Activated naive CD8-positive, alpha-beta T cell treated with anti-CD3 and anti-CD28 coated beads, Interleukin-2, amount 10 ng/mL, durations not matched to agents 7 days and 5 days (primary cell): ENCODE measurements at regions of chr5 and their contacts with region 1.

Region 1: DNA sequence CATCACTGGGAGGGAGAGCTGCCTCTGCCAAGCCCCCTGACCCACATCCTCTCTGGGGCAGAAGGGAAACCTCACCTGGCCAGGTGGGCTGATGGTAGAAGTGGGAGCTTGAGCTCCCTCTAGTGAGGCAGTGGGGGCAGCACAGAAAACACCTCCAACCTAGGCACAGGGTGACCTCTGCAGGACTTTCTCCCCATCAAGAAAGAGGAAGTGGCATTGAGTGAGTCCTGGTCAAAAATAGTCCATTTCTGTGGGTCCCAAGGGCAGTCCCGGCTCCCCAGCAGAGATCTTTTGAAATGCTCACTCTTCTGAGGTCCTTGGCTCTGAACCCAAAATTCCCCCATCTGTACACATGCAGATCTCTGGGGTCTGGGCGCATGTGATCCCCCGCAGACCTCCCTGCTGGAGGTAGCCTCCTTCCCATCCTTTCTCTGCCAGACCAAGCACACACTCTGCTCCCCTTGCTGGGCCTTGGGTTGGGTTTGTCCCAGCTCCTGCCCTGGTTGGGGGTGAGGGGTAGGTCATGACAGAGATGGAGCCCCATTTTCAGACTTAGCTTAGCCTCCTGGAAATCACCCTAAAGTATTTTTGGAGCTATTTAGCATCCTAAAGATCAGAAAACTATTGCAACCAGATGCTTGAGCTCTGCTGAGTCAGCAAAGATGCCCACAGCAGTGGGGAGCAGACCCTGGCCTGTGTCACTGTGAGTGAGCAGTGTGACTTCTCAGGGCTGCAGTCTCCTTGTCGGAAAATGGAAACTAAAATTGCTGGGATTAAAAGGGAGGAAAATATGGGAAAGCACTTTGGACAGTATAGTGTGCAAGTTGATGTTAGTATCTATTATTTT is 41.6 kb upstream of the LCP2 start:
- DNase-seq: peak; percentile 68
- ATAC-seq: peak; percentile 73
- H3K4me3 Mint-ChIP-seq: no peak overlapping the region
- H3K27ac Mint-ChIP-seq: no peak overlapping the region
- H3K4me1 Mint-ChIP-seq: peaks cover 41% of the 10 kb centered on the region
- H3K27me3 Mint-ChIP-seq: peaks cover 5% of the 10 kb centered on the region

Region 2: GRCh38 chr5:170120576-170120975 is 218.6 kb before region 1 on chr5:
- POLR2A ChIA-PET with region 1: no interaction called
- DNase-seq: no peak
- ATAC-seq: no peak
- H3K4me3 Mint-ChIP-seq: no peak overlapping the region
- H3K27ac Mint-ChIP-seq: no peak overlapping the region
- H3K4me1 Mint-ChIP-seq: no peaks in the 10 kb centered on the region
- H3K27me3 Mint-ChIP-seq: peaks cover 16% of the 10 kb centered on the region

Region 3: GRCh38 chr5:170267431-170268152 is 71.6 kb before region 1 on chr5:
- POLR2A ChIA-PET with region 1: interaction called, 34 read pairs
- DNase-seq: peak; percentile 79
- ATAC-seq: peak; percentile 44
- H3K4me3 Mint-ChIP-seq: peak overlapping the region; percentile 75
- H3K27ac Mint-ChIP-seq: peak overlapping the region; percentile 92
- H3K4me1 Mint-ChIP-seq: peaks cover 85% of the 10 kb centered on the region
- H3K27me3 Mint-ChIP-seq: no peaks in the 10 kb centered on the region

Region 4: GRCh38 chr5:170278611-170279452 is 60.3 kb before region 1 on chr5:
- POLR2A ChIA-PET with region 1: interaction called, 32 read pairs
- DNase-seq: peak; percentile 87
- ATAC-seq: peak; percentile 76
- H3K4me3 Mint-ChIP-seq: peak overlapping the region; percentile 69
- H3K27ac Mint-ChIP-seq: peak overlapping the region; percentile 88
- H3K4me1 Mint-ChIP-seq: peaks cover 86% of the 10 kb centered on the region
- H3K27me3 Mint-ChIP-seq: no peaks in the 10 kb centered on the region

Region 5: DNA sequence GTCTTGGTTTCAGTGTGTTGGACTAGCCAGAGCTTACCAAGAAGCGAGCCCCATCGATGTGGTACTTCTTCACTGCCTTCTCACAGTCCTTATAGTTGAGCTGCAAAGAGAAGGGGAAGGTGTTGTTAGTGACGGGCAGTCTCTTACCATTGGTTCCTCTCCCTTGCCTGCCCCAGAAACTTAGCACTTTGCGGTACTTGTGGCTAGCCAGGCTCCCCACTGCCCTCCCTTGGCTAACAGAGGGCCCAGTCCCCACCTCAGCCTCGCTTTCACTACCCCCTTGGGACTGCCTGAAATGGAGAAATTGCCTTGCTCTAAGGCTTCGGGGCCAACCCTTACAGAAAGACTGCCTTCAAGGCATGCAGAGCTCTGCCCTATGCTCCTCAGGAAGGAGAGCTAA is 45.9 kb before region 1 on chr5:
- POLR2A ChIA-PET with region 1: interaction called, 371 read pairs
- DNase-seq: peak; percentile 88
- ATAC-seq: peak; percentile 68
- H3K4me3 Mint-ChIP-seq: peak overlapping the region; percentile 99
- H3K27ac Mint-ChIP-seq: peak overlapping the region; percentile 97
- H3K4me1 Mint-ChIP-seq: peaks cover 60% of the 10 kb centered on the region
- H3K27me3 Mint-ChIP-seq: no peaks in the 10 kb centered on the region

Region 6: DNA sequence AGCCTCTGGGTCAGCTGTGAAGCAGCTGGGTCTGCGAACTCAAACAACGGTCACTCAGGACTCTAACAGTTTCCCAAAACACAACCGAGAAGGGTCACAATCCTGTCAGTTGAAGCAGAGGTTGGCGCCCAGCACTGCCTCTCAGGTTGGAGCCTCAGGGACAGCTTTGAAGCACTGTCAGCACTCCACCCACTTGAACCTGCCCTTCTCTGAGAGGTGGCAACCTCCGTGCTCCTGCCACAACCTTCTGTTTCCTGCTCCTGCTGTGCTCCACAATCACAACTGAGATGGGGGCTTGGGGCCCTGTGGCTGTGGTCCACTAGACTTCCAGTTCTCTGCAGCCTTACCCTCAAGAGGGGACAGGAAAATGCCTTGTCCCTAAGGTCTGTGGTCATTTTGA is 19.9 kb before region 1 on chr5:
- POLR2A ChIA-PET with region 1: no interaction called
- DNase-seq: no peak
- ATAC-seq: peak; percentile 65
- H3K4me3 Mint-ChIP-seq: no peak overlapping the region
- H3K27ac Mint-ChIP-seq: no peak overlapping the region
- H3K4me1 Mint-ChIP-seq: peaks cover 8% of the 10 kb centered on the region
- H3K27me3 Mint-ChIP-seq: no peaks in the 10 kb centered on the region